Naive thymus-derived CD4-positive, alpha-beta T cell (primary cell): ENCODE measurements at regions of chr9 and their contacts with region 1.

Region 1: GRCh38 chr9:69759421-69760277 is at the start of gene PTAR1:
- DNase-seq: peak; percentile 80 to 95 (median 89)
- ATAC-seq: peak; percentile 93
- H3K4me3 ChIP-seq: peak within 1 kb of the TSS; percentile 76
- H3K4me3 Mint-ChIP-seq: peak within 1 kb of the TSS; percentile 87 to 99 (median 96)
- H3K27ac ChIP-seq: peak within 1 kb of the TSS; percentile 93
- H3K27ac Mint-ChIP-seq: peak within 1 kb of the TSS; percentile 85 to 98 (median 94)
- H3K4me1 ChIP-seq: peaks cover 7 to 16% of the 10 kb centered on the region in 2 donors
- H3K4me1 Mint-ChIP-seq: peaks cover 14 to 51% (median 35%) of the 10 kb centered on the region in 7 donors
- H3K27me3 ChIP-seq: no peaks in the 10 kb centered on the region
- H3K27me3 Mint-ChIP-seq: no peaks in the 10 kb centered on the region
- total RNA-seq, gene PTAR1: 59.6 to 82.4 (median 65.7) TPM

Region 2: GRCh38 chr9:69035438-69036308 is 724.0 kb before region 1 on chr9 and contains the start of gene FXN:
- CTCF ChIA-PET with region 1: no interaction called
- POLR2A ChIA-PET with region 1: no interaction called
- intact Hi-C with region 1: loop called in 1 of 2 experiments (anchors 1 kb)
- DNase-seq: peak; percentile 60 to 89 (median 81)
- ATAC-seq: peak; percentile 95
- H3K4me3 ChIP-seq: peak within 1 kb of the TSS; percentile 72
- H3K4me3 Mint-ChIP-seq: peak within 1 kb of the TSS; percentile 91 to 99 (median 97)
- H3K27ac ChIP-seq: peak within 1 kb of the TSS; percentile 73
- H3K27ac Mint-ChIP-seq: peak within 1 kb of the TSS; percentile 88 to 95 (median 91)
- H3K4me1 ChIP-seq: peaks cover 9 to 16% of the 10 kb centered on the region in 2 donors
- H3K4me1 Mint-ChIP-seq: peaks cover 14 to 73% (median 38%) of the 10 kb centered on the region in 7 donors
- H3K27me3 ChIP-seq: no peaks in the 10 kb centered on the region
- H3K27me3 Mint-ChIP-seq: no peaks in the 10 kb centered on the region
- total RNA-seq, gene FXN: 16.7 to 28.3 (median 19.1) TPM

Region 3: DNA sequence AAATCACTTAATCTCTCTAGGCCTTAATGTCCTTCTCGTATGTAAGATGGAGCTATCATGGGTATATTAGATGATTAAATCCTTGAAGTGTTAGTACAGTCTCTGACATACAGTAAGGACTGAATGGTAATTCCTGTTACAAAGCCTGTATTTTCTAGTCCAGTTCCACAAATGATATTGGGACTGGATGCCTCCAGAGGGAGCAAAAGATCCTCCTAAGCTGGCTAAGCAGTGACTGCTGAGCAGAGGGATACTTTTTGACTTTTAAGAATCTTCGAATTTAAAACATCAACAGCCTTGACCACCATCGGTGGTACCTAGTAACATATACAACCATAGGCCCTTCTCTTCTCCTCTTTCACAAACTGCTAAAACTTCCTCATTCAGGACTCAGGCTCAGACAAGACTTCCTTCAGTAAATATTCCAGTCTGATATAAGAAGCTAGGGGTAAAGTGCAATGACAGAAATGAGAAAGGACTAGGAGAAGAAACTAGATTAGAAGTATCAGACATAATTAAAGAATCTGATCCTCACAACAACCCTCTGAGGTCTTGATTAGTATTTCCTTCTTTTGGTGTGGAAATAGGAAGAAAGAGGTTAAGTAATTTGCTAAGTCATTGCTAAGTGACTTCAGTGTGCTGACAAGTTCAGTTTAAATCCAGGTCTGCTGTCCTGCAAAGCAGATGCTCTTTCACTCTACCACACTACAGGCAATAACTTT is 13.8 kb before region 1 on chr9:
- CTCF ChIA-PET with region 1: no interaction called
- POLR2A ChIA-PET with region 1: no interaction called
- intact Hi-C with region 1: loop called in 1 of 2 experiments (anchors 1 kb)
- DNase-seq: no peak
- ATAC-seq: peak; percentile 50
- H3K4me3 ChIP-seq: no peak overlapping the region
- H3K4me3 Mint-ChIP-seq: peak overlapping the region in 1 of 10 donors; percentile 15
- H3K27ac ChIP-seq: no peak overlapping the region
- H3K27ac Mint-ChIP-seq: peak overlapping the region in 6 of 9 donors; percentile 2 to 79 (median 40)
- H3K4me1 ChIP-seq: no peaks in the 10 kb centered on the region
- H3K4me1 Mint-ChIP-seq: peaks cover 28 to 71% (median 55%) of the 10 kb centered on the region in 7 donors
- H3K27me3 ChIP-seq: no peaks in the 10 kb centered on the region
- H3K27me3 Mint-ChIP-seq: no peaks in the 10 kb centered on the region

Region 4: DNA sequence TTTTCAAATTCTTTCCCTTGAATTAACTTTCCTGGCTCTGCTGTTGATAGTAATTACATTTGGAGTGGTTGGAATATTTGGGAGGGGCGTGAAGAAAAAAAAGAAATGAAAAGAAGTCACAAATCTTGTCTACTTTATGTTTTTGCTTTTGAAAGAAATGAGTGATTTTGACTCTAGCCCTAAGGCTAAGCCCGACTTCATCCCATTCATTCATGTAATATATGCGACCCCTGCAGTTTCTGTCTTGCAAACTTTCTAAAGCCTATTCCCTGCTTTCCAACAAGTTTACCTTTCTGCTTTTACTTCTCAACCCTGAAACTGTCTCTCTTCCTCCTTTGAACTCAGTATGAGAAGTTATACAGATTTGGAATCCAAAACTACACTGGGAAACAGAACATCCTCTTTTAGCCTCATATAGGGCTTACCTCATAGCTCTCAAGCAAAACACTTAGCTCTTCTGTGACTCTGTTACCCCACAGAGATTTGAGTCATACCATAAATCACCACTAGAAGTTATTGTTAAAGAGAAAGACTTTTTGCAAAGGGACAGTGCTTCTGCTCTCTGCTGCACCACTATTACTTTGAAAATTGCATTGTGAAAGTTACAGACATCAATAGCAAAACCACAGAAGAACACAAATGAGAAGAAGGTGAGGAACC is 62.6 kb after region 1 on chr9:
- CTCF ChIA-PET with region 1: no interaction called
- POLR2A ChIA-PET with region 1: no interaction called
- intact Hi-C with region 1: loop called (anchors 2 to 10 kb)
- DNase-seq: no peak
- ATAC-seq: peak; percentile 66
- H3K4me3 ChIP-seq: no peak overlapping the region
- H3K4me3 Mint-ChIP-seq: peak overlapping the region in 1 of 10 donors; percentile 15
- H3K27ac ChIP-seq: no peak overlapping the region
- H3K27ac Mint-ChIP-seq: peak overlapping the region in 3 of 9 donors; percentile 3 to 29 (median 12)
- H3K4me1 ChIP-seq: no peaks in the 10 kb centered on the region
- H3K4me1 Mint-ChIP-seq: peaks cover 12 to 51% (median 25%) of the 10 kb centered on the region in 7 donors
- H3K27me3 ChIP-seq: no peaks in the 10 kb centered on the region
- H3K27me3 Mint-ChIP-seq: peaks cover 16 to 33% (median 28%) of the 10 kb centered on the region in 5 donors

Region 5: DNA sequence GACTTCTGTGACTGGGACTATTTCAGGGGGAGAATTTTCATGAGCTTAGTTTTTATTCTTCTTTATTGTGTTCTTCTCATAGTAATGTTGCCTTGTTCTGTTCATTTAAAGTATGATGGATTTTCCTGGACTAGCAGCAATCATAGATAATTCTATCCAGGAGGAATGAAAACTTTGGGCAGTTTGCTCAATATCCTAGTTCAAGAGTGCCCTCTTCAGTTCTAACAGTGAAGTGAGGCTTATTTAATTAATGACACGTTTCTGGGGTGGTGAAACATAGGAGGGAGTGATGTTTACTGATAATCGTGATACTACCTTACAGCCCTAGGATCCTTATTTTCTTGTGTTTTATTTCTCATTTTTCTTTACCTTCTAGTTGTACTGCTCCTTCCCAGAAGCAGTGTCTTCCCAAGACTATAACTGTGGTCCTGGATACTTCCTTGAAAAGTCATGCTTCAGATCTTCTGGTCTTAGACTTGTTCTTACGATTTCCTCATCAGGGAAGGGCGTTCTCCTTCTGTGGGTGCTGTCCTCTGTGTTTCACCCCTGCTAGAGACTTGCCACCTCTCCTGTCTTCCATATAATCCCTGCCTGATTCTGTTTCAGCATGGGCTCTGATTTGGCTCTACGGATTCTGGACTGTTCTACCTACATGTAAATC is 118.3 kb after region 1 on chr9:
- CTCF ChIA-PET with region 1: no interaction called
- POLR2A ChIA-PET with region 1: no interaction called
- intact Hi-C with region 1: loop called in 1 of 2 experiments (anchors 5 kb)
- DNase-seq: peak in 5 of 9 donors; percentile 2 to 25 (median 6)
- ATAC-seq: no peak
- H3K4me3 ChIP-seq: no peak overlapping the region
- H3K4me3 Mint-ChIP-seq: no peak overlapping the region
- H3K27ac ChIP-seq: no peak overlapping the region
- H3K27ac Mint-ChIP-seq: no peak overlapping the region
- H3K4me1 ChIP-seq: no peaks in the 10 kb centered on the region
- H3K4me1 Mint-ChIP-seq: no peaks in the 10 kb centered on the region
- H3K27me3 ChIP-seq: no peaks in the 10 kb centered on the region
- H3K27me3 Mint-ChIP-seq: peaks cover 0 to 37% (median 2%) of the 10 kb centered on the region in 5 donors